Natural killer cell (primary cell): ENCODE measurements at regions of chr17 and their contacts with region 1.

Region 1: DNA sequence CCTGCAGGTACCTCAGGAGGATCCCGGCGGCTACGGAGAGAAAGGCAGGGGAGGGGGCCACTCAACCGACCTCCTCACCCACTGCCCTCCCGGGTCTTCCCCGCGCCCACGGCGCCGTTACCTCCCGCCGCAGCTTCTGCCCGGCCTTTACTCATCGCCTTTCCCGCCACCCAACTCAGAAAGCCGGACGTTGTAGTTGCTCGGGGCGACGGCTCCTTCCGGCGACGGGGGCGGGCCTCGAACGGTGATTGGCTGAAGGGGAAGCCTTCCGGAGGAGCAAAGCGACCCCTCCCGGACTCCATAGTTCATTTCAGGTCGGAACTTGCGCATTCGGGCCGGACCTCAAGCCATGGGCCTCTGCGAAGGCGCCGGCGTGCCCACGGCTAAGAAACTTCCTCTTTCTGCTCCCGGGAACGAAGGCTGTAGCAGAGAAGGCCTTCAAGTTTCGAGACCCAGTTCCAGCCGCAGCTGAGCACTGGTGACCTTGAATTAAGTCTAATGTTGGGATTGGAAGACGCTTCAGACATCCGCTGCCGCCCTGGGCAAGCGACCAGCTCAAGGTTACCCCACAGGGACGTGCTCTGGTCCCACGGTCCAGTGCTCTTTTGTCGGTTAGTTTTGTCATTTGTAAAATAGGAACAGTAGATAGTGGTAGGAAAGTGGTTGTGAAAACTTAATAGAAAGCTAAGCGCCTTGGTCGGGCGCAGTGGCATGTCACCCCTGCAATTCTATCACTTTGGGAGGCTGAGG is at the start of gene PSMC3IP:
- DNase-seq: peak; percentile 88 to 94
- ATAC-seq: peak; percentile 96 to 98 (median 96)
- H3K4me3 ChIP-seq: peak within 1 kb of the TSS; percentile 88
- H3K4me3 Mint-ChIP-seq: peak within 1 kb of the TSS; percentile 98
- H3K27ac ChIP-seq: peak within 1 kb of the TSS; percentile 79
- H3K27ac Mint-ChIP-seq: peak within 1 kb of the TSS; percentile 95 to 96
- H3K4me1 ChIP-seq: peaks cover 18% of the 10 kb centered on the region
- H3K4me1 Mint-ChIP-seq: peaks cover 36 to 39% of the 10 kb centered on the region in 2 donors
- H3K27me3 ChIP-seq: no peaks in the 10 kb centered on the region
- H3K27me3 Mint-ChIP-seq: no peaks in the 10 kb centered on the region
- CTCF ChIP-seq: peak; percentile 12
- total RNA-seq, gene PSMC3IP: 5.0 to 6.2 (median 5.7) TPM

Region 2: DNA sequence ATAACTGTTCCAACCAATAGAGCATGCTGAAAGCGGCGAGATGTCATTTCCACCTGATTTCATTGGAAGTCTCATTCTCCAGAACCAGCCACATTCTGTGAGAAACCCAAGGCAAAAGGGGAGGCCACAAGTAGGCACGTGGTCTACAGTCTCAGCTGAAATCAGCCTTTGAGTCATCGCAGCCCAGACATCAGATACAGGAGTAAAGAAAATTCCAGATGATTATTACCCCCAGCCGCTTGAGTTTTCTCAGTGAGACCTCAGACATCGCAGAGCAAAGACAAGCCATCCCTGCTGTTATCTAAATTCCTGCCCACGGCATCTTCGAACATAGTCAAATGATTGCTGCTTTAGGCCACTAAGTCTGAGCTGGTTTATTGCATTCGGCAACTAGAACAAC is 212.6 kb before region 1 on chr17:
- intact Hi-C with region 1: no loop called
- DNase-seq: no peak
- ATAC-seq: peak in 1 of 3 donors; percentile 27
- H3K4me3 ChIP-seq: no peak overlapping the region
- H3K4me3 Mint-ChIP-seq: no peak overlapping the region
- H3K27ac ChIP-seq: no peak overlapping the region
- H3K27ac Mint-ChIP-seq: peak overlapping the region in 1 of 2 donors; percentile 66
- H3K4me1 ChIP-seq: peaks cover 69% of the 10 kb centered on the region
- H3K4me1 Mint-ChIP-seq: peaks cover 76 to 84% of the 10 kb centered on the region in 2 donors
- H3K27me3 ChIP-seq: no peaks in the 10 kb centered on the region
- H3K27me3 Mint-ChIP-seq: no peaks in the 10 kb centered on the region
- CTCF ChIP-seq: no peak

Region 3: DNA sequence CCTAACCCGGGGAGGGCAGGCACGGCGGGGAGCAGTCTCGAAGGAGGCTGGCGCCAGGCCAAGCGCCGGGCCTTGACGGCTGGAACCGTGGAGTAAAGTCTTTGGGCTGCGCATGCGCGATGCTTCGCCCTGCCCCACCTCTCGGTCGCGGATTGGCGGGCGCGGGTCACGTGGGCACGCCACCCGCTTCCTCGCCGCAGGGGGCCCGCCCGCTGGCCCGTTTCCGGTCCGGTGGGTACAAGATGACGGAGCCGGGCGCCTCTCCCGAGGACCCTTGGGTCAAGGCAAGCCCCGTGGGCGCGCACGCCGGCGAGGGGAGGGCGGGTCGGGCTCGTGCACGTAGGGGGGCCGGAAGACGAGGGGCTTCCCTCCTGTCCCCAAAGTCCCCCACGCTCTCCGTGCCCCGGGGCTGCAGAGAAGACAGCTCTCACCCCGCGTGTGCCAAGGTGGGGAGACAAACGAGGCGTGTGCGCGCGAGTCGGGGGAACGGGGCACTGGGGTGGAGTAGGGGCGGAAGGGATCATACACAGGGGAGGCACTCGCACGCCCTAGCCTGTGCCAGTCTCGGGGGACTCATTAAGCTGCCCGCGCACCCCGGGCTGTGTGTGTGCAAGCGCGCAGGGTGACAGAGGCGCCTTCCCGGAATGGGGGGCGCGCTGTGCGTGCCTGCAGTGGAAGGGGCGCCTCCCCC is 10.7 kb before region 1 on chr17 and contains the start of gene MLX:
- intact Hi-C with region 1: loop called (anchors 2 kb)
- DNase-seq: peak; percentile 94 to 97
- ATAC-seq: peak; percentile 74 to 85 (median 79)
- H3K4me3 ChIP-seq: peak within 1 kb of the TSS; percentile 79
- H3K4me3 Mint-ChIP-seq: peak within 1 kb of the TSS; percentile 92
- H3K27ac ChIP-seq: peak within 1 kb of the TSS; percentile 77
- H3K27ac Mint-ChIP-seq: peak within 1 kb of the TSS; percentile 85 to 96
- H3K4me1 ChIP-seq: peaks cover 50% of the 10 kb centered on the region
- H3K4me1 Mint-ChIP-seq: peaks cover 40 to 43% of the 10 kb centered on the region in 2 donors
- H3K27me3 ChIP-seq: no peaks in the 10 kb centered on the region
- H3K27me3 Mint-ChIP-seq: no peaks in the 10 kb centered on the region
- CTCF ChIP-seq: no peak
- total RNA-seq, gene MLX: 38.9 to 58.2 (median 42.6) TPM

Region 4: GRCh38 chr17:42609182-42609813 is 31.6 kb after region 1 on chr17 and contains the starts of genes RETREG3 and TUBG1:
- intact Hi-C with region 1: loop called (anchors 2 kb)
- DNase-seq: peak; percentile 98 to 100
- ATAC-seq: peak; percentile 88 to 95 (median 90)
- H3K4me3 ChIP-seq: peak within 1 kb of the TSS; percentile 98
- H3K4me3 Mint-ChIP-seq: peak within 1 kb of the TSS; percentile 100
- H3K27ac ChIP-seq: peak within 1 kb of the TSS; percentile 90
- H3K27ac Mint-ChIP-seq: peak within 1 kb of the TSS; percentile 96 to 97
- H3K4me1 ChIP-seq: peaks cover 32% of the 10 kb centered on the region
- H3K4me1 Mint-ChIP-seq: peaks cover 44 to 53% of the 10 kb centered on the region in 2 donors
- H3K27me3 ChIP-seq: no peaks in the 10 kb centered on the region
- H3K27me3 Mint-ChIP-seq: no peaks in the 10 kb centered on the region
- CTCF ChIP-seq: no peak
- total RNA-seq, gene RETREG3: 76.0 to 114 (median 101) TPM
- total RNA-seq, gene TUBG1: 9.7 to 16.5 (median 13.0) TPM

Region 5: GRCh38 chr17:42677921-42678781 is 100.4 kb after region 1 on chr17:
- intact Hi-C with region 1: loop called (anchors 1 kb)
- DNase-seq: peak; percentile 78 to 80
- ATAC-seq: peak; percentile 25 to 54 (median 30)
- H3K4me3 ChIP-seq: peak overlapping the region; percentile 52
- H3K4me3 Mint-ChIP-seq: peak overlapping the region; percentile 94
- H3K27ac ChIP-seq: peak overlapping the region; percentile 36
- H3K27ac Mint-ChIP-seq: peak overlapping the region; percentile 74 to 81
- H3K4me1 ChIP-seq: peaks cover 89% of the 10 kb centered on the region
- H3K4me1 Mint-ChIP-seq: peaks cover 21 to 63% of the 10 kb centered on the region in 2 donors
- H3K27me3 ChIP-seq: peaks cover 49% of the 10 kb centered on the region
- H3K27me3 Mint-ChIP-seq: peaks cover 21 to 38% of the 10 kb centered on the region in 2 donors
- CTCF ChIP-seq: no peak

Region 6: GRCh38 chr17:42760652-42761581 is 183.2 kb after region 1 on chr17 and contains the start of gene RAMP2:
- intact Hi-C with region 1: loop called (anchors 5 kb)
- DNase-seq: peak in 1 of 2 donors; percentile 40
- ATAC-seq: peak; percentile 28 to 61 (median 49)
- H3K4me3 ChIP-seq: no peak within 1 kb of the TSS
- H3K4me3 Mint-ChIP-seq: peak within 1 kb of the TSS; percentile 52
- H3K27ac ChIP-seq: no peak within 1 kb of the TSS
- H3K27ac Mint-ChIP-seq: no peak within 1 kb of the TSS
- H3K4me1 ChIP-seq: peaks cover 15% of the 10 kb centered on the region
- H3K4me1 Mint-ChIP-seq: peaks cover 0 to 9% of the 10 kb centered on the region in 2 donors
- H3K27me3 ChIP-seq: peaks cover 20% of the 10 kb centered on the region
- H3K27me3 Mint-ChIP-seq: peaks cover 47 to 51% of the 10 kb centered on the region in 2 donors
- CTCF ChIP-seq: no peak
- total RNA-seq, gene RAMP2: not detected